CD4-positive, alpha-beta memory T cell (primary cell): ENCODE measurements at regions of chr9 and their contacts with region 1.

Region 1: DNA sequence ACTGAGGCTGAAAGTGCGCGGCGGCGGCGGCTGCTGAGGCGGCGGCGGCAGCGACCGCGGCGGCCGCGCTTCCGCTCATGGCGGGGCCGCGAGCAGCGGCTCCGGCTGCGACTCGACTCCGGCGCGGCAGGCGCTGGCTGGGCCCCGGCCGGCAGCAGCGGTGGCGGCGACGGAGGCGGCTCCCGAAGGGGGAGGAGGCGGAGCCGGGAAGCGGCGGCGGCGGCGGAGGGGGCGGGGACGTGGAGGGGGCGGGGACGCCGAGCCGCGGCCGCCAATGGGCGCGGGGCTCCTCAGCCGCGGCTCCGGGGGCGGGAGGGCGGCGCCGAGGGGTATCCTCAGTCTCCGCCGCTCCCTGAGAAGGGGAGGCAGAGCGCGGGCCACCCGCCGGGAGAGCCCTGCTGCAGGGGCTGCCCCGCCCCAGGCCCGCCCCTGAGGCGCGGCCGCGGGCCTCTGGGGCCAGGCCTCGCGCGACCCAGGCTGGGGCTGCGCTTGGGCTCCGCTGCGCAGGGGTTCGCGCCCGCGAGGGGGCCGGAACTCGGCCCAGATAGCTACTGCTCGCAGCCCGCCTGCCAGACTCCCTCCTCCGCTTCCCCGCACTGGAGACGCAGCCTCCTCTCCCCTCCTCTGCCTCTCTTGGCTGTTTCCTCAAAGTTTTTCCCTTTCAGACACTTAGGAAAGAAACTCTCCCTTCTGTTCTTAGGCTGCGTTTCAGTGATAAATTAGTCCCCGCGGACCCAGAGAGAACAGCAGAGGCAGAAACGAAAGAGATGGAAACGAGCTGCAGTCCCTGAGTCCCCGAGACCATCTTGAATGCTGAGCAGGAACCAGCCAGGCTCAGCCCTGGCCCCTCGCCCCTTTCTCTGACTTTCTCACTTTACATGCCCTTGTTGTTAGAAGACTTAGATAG is 85.0 kb upstream of the MELK start:
- DNase-seq: peak; percentile 90 to 95 (median 92)
- H3K4me3 ChIP-seq: peak overlapping the region; percentile 18 to 85
- H3K4me3 Mint-ChIP-seq: peak overlapping the region; percentile 93 to 98 (median 96)
- H3K27ac ChIP-seq: peak overlapping the region; percentile 89
- H3K27ac Mint-ChIP-seq: peak overlapping the region; percentile 97 to 99 (median 98)
- H3K4me1 ChIP-seq: peaks cover 58% of the 10 kb centered on the region
- H3K4me1 Mint-ChIP-seq: peaks cover 42 to 80% (median 59%) of the 10 kb centered on the region in 4 donors
- H3K27me3 ChIP-seq: no peaks in the 10 kb centered on the region
- H3K27me3 Mint-ChIP-seq: no peaks in the 10 kb centered on the region

Region 2: DNA sequence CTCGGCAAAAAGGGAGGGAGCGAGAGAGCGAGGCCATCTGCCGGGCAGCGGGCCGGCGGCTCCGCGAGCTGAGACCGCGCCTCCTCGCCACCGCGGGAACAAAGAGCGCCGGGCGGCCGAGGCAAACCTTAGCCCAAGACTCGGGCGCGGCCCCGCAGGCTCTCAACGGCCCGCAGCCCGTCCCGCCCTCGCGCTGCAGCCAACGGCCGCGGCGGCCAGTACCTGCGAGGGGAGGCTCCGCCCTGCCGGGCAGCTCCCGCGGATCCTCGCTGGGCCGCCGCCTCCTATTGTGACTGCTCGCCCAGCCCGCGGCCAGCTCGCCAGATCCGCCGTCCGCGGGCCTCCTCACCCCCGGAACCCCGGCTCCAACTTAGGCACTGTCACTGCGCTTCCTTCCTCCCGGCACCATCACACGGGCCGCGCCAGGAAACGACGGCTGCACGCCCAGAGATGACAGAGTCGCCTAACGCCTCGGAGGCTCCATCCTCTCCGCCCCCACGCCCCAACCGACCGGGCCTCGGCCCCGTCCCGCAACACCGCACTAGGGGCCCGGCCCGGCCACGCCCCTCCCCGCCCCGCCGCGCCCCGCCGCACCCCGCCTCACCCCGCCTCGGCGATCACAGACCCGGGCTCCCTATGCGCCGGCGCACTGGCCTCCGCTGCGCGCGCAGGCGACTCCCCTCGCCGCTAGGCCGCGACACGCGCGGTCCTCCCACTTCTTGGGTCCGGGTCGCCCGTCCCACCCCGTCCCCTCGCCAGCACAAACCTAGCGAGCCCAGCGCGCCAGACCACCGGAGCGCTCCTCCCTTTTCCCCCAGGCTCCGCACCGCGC is 87.2 kb before region 1 on chr9:
- CTCF ChIA-PET with region 1: interaction called, 23 read pairs
- POLR2A ChIA-PET with region 1: interaction called, 50 read pairs
- intact Hi-C with region 1: loop called (anchors 2 kb)
- DNase-seq: peak; percentile 89 to 93 (median 90)
- H3K4me3 ChIP-seq: peak overlapping the region; percentile 65 to 77
- H3K4me3 Mint-ChIP-seq: peak overlapping the region; percentile 92 to 97 (median 94)
- H3K27ac ChIP-seq: peak overlapping the region; percentile 97
- H3K27ac Mint-ChIP-seq: peak overlapping the region; percentile 92 to 100 (median 98)
- H3K4me1 ChIP-seq: peaks cover 45% of the 10 kb centered on the region
- H3K4me1 Mint-ChIP-seq: peaks cover 30 to 58% (median 44%) of the 10 kb centered on the region in 4 donors
- H3K27me3 ChIP-seq: no peaks in the 10 kb centered on the region
- H3K27me3 Mint-ChIP-seq: no peaks in the 10 kb centered on the region

Region 3: DNA sequence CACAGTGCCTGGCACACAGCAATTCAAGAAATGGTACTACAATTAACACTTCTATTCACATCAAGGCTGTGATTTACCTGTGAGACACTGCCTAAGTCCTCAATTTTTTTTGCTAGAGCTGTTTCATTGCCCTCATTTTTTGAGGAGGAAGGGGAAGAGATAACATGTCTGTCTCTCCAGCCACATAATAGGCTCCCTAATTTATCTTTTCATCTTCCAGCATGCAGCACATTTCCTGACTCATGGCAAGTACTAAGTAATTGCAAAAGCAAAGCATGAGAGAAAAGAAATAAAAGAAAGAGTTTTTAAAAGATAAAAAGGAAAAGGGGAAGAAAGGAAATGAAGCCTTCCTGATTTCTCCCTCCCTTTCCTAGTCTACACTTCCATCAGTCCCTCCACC is 60.8 kb before region 1 on chr9:
- CTCF ChIA-PET with region 1: no interaction called
- POLR2A ChIA-PET with region 1: no interaction called
- intact Hi-C with region 1: no loop called
- DNase-seq: no peak
- H3K4me3 ChIP-seq: no peak overlapping the region
- H3K4me3 Mint-ChIP-seq: peak overlapping the region in 1 of 8 donors; percentile 30
- H3K27ac ChIP-seq: no peak overlapping the region
- H3K27ac Mint-ChIP-seq: peak overlapping the region in 4 of 7 donors; percentile 24 to 87 (median 61)
- H3K4me1 ChIP-seq: peaks cover 17% of the 10 kb centered on the region
- H3K4me1 Mint-ChIP-seq: peaks cover 38 to 64% (median 42%) of the 10 kb centered on the region in 4 donors
- H3K27me3 ChIP-seq: no peaks in the 10 kb centered on the region
- H3K27me3 Mint-ChIP-seq: no peaks in the 10 kb centered on the region

Region 4: GRCh38 chr9:36450110-36450732 is 37.5 kb before region 1 on chr9:
- CTCF ChIA-PET with region 1: interaction called, 6 read pairs
- POLR2A ChIA-PET with region 1: interaction called, 88 read pairs
- intact Hi-C with region 1: loop called (anchors 5 kb)
- DNase-seq: peak in 4 of 5 donors; percentile 24 to 30 (median 29)
- H3K4me3 ChIP-seq: no peak overlapping the region
- H3K4me3 Mint-ChIP-seq: no peak overlapping the region
- H3K27ac ChIP-seq: no peak overlapping the region
- H3K27ac Mint-ChIP-seq: peak overlapping the region in 2 of 7 donors; percentile 12 to 29
- H3K4me1 ChIP-seq: peaks cover 20% of the 10 kb centered on the region
- H3K4me1 Mint-ChIP-seq: peaks cover 16 to 32% (median 25%) of the 10 kb centered on the region in 4 donors
- H3K27me3 ChIP-seq: no peaks in the 10 kb centered on the region
- H3K27me3 Mint-ChIP-seq: no peaks in the 10 kb centered on the region

Region 5: DNA sequence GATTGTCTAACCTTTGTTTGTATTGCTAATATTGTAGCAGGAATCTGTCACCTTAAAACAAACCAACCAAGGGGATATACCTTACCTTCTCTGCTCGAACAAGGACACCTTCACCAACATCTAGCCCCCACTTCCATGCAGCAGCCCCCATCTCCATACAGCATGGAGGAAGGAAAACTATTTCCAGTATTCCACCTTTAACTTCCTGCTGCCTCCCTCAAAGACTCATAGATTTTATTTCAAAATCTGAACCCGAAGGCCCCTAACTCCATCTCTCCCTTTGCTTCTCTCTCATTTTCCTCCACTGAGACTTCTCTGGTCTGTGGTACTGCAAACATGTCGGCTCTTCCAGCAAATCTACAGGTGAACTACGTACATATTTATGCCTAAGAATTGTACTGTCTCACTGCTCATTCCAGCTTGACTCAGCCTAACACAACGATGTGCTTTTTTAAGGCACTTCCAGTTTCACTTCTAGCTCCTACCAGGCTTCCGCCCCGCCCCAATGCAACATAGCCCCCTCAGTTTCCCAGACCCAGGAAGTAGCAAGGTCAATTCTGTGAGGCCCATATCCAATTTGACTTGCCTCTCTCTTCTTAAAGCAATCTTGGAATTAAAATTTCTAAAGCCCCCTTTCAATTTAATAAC is 17.0 kb before region 1 on chr9:
- CTCF ChIA-PET with region 1: interaction called, 5 read pairs
- POLR2A ChIA-PET with region 1: interaction called, 64 read pairs
- intact Hi-C with region 1: loop called (anchors 1 kb)
- DNase-seq: peak; percentile 57 to 77 (median 65)
- H3K4me3 ChIP-seq: peak overlapping the region; percentile 25 to 36
- H3K4me3 Mint-ChIP-seq: peak overlapping the region; percentile 75 to 97 (median 91)
- H3K27ac ChIP-seq: peak overlapping the region; percentile 72
- H3K27ac Mint-ChIP-seq: peak overlapping the region; percentile 84 to 99 (median 97)
- H3K4me1 ChIP-seq: peaks cover 43% of the 10 kb centered on the region
- H3K4me1 Mint-ChIP-seq: peaks cover 28 to 41% (median 33%) of the 10 kb centered on the region in 4 donors
- H3K27me3 ChIP-seq: no peaks in the 10 kb centered on the region
- H3K27me3 Mint-ChIP-seq: no peaks in the 10 kb centered on the region

Region 6: DNA sequence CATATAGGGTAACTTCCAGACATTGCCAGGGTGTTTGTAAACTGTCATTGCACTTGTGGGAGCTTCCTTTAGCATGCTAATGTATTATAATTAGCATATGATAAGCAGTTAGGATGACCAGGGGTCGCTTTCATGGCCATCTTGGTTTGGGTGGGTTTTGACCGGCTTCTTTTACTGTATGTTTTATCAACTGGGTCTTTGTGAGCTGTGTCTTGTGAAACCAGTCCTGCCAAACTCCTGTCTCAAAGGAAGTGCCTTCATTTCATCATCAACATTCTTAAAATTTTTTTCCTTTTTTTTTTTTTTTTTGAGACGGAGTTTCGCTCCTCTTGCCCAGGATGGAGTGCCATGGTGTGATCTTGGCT is 73.1 kb after region 1 on chr9:
- CTCF ChIA-PET with region 1: interaction called, 11 read pairs
- POLR2A ChIA-PET with region 1: no interaction called
- intact Hi-C with region 1: no loop called
- DNase-seq: no peak
- H3K4me3 ChIP-seq: no peak overlapping the region
- H3K4me3 Mint-ChIP-seq: no peak overlapping the region
- H3K27ac ChIP-seq: no peak overlapping the region
- H3K27ac Mint-ChIP-seq: no peak overlapping the region
- H3K4me1 ChIP-seq: no peaks in the 10 kb centered on the region
- H3K4me1 Mint-ChIP-seq: peaks cover 0 to 2% (median under 1%) of the 10 kb centered on the region in 4 donors
- H3K27me3 ChIP-seq: no peaks in the 10 kb centered on the region
- H3K27me3 Mint-ChIP-seq: no peaks in the 10 kb centered on the region